Heart right ventricle (tissue), 16 donors: ENCODE measurements at regions of chr17 and their contacts with region 1.

Region 1: GRCh38 chr17:76397687-76398487 is 13.5 kb downstream of the SPHK1 start:
- DNase-seq: peak; percentile 87 to 91
- ATAC-seq: peak; percentile 74 to 89 (median 85)
- H3K4me3 ChIP-seq: no peak overlapping the region
- H3K27ac ChIP-seq: peak overlapping the region in 1 of 10 donors; percentile 17
- H3K4me1 ChIP-seq: peaks cover 3 to 16% (median 6%) of the 10 kb centered on the region in 9 donors
- H3K27me3 ChIP-seq: no peaks in the 10 kb centered on the region
- CTCF ChIP-seq: peak; percentile 96 to 99 (median 97)

Region 2: GRCh38 chr17:76103274-76104139 is 294.4 kb before region 1 on chr17 and contains the start of gene EXOC7:
- intact Hi-C with region 1: loop called in 2 of 10 experiments (anchors 10 kb)
- DNase-seq: peak; percentile 92 to 93
- ATAC-seq: peak; percentile 95 to 99 (median 99)
- H3K4me3 ChIP-seq: peak within 1 kb of the TSS; percentile 52 to 93 (median 83)
- H3K27ac ChIP-seq: peak within 1 kb of the TSS; percentile 53 to 93 (median 86)
- H3K4me1 ChIP-seq: peaks cover 8 to 31% (median 21%) of the 10 kb centered on the region in 9 donors
- H3K27me3 ChIP-seq: no peaks in the 10 kb centered on the region
- CTCF ChIP-seq: peak in 2 of 9 donors; percentile 12 to 22
- total RNA-seq, gene EXOC7: 66.4 to 97.5 (median 87.9) TPM

Region 3: DNA sequence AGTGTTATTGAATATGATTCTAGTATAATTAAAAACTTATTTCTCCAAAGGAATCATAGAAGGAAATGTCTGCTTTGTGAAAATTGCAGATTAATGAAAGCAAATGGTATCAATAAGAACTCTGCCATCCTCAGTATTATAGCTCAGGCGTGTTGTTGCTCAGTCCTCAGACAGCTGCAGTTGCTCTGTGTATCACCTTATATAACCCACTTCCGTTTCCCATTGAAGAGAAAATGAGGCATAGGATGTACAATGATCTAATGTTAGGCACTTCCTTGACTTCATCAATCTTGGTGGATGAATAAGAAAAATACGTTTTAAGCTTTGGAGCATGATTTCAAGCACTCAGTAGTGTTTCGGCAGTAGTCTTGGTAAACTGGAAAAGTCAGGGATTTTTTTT is 354.1 kb after region 1 on chr17:
- intact Hi-C with region 1: no loop called
- DNase-seq: no peak
- ATAC-seq: no peak
- H3K4me3 ChIP-seq: no peak overlapping the region
- H3K27ac ChIP-seq: peak overlapping the region in 2 of 10 donors; percentile 41 to 43
- H3K4me1 ChIP-seq: peaks cover 0 to 19% (median 0%) of the 10 kb centered on the region in 9 donors
- H3K27me3 ChIP-seq: no peaks in the 10 kb centered on the region
- CTCF ChIP-seq: no peak